Uterus (tissue), 4 donors: ENCODE measurements at regions of chr1 and their contacts with region 1.

Region 1: GRCh38 chr1:25895365-25895993 is 10.7 kb downstream of the STMN1 start:
- DNase-seq: peak; percentile 91 to 92
- H3K4me3 ChIP-seq: no peak overlapping the region
- H3K27ac ChIP-seq: peak overlapping the region; percentile 41 to 44
- H3K4me1 ChIP-seq: peaks cover 0 to 5% of the 10 kb centered on the region in 2 donors
- H3K27me3 ChIP-seq: no peaks in the 10 kb centered on the region
- CTCF ChIP-seq: peak; percentile 97 to 100 (median 98)
- POLR2A ChIP-seq: no peak

Region 2: GRCh38 chr1:25867210-25867991 is 28.1 kb before region 1 on chr1:
- intact Hi-C with region 1: no loop called
- DNase-seq: no peak
- H3K4me3 ChIP-seq: no peak overlapping the region
- H3K27ac ChIP-seq: no peak overlapping the region
- H3K4me1 ChIP-seq: peaks cover 0 to 4% of the 10 kb centered on the region in 2 donors
- H3K27me3 ChIP-seq: no peaks in the 10 kb centered on the region
- CTCF ChIP-seq: no peak
- POLR2A ChIP-seq: no peak

Region 3: DNA sequence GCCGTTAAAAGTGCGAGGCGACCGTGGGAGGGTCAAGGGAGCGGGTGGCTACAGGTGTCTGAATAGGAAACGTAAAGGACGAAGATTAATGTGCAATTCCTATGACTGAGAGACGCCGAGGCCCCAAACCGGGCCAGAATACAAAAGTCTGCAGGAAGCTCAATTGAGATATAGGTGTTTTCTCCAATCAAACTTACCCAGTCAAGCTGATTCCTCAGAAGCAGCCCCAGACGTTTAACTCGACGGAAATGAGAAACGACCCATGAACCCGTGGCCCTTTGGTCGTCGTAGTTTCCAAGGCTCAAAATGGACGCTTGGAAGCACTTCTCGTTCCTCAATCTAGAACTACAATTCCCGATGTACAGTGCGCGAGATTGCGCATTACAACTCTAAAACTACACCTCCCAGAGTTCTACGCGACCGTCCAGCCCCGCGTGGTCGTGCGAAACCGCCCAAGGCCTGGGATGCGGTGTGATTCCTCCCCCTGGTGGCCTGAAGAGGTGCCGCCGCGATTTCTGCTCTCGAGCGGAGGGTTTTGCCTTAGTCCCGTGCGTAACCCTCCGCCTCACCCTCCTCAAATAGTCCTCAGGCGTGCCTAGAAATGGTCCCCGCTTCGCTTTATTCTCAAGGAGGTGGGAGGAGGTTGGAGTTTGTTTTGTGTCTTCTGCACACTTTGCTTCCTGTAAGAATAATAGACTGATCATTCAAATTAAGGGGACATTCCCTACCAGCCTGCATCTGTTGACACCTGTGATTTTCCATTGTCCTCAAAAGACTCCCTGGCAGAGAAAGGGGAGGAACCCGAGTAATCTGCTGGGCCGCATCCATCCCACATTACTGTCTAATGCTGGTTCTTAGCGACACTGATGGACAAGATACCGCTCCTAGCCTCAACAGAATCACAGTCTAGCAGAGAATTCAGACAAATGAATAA is 102.6 kb after region 1 on chr1 and contains the start of gene PAFAH2:
- intact Hi-C with region 1: loop called (anchors 2 kb)
- DNase-seq: peak; percentile 97 to 98
- H3K4me3 ChIP-seq: peak within 1 kb of the TSS; percentile 64 to 69
- H3K27ac ChIP-seq: peak within 1 kb of the TSS; percentile 85 to 86
- H3K4me1 ChIP-seq: no peaks in the 10 kb centered on the region
- H3K27me3 ChIP-seq: no peaks in the 10 kb centered on the region
- CTCF ChIP-seq: peak; percentile 92 to 100 (median 98)
- POLR2A ChIP-seq: no peak
- total RNA-seq, gene PAFAH2: 6.2 to 12.3 (median 9.2) TPM